ENCODE measurements at regions of chr17 and their contacts with region 1.

Region 1: DNA sequence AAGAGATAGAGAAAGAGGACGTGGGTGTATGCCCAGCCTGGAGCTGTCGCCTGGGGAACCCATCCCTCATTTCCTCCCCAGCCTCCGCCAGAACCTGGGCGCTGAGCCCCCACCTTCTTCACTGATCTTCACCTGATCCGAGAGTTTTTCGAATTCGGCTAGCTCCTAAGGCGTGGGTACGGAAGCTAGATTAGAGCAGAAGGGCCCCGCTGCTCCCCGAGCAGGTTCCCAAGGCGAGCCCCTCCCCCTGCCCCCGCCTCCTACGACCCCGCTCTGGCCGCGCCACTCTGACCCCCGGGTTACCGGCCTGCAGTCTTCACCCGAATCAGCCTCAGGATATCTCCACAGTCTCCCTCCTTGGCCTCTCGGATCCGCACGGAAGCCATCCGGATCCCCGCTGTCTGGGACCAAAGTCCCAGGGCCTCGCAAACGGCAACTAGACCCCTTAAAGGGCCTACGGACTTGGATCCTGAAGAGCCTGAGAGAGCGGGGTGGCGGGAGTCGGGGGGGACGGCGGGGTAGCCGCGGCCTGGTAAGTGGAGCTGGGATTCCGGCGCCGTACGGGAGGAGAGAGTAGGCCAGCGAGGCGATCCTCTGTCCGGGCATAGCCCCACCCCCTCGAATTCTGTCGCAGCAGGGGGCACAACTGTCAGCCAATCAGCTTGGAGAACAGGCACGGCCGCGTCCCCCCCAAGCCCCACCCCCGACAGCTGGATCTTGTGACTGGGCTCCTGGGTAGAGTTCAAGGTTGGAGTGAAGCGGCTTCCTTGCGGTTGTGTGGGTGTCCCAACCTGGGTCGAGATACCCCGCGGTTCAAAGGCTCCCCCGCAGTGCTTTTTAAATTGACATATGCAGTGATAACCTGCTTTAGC is at the start of gene SAT2:
- DNase-seq: peak; percentile 76 to 94 (median 86)
- ATAC-seq: peak; percentile 95
- H3K4me3 ChIP-seq: peak within 1 kb of the TSS; percentile 78 to 85
- H3K4me3 Mint-ChIP-seq: peak within 1 kb of the TSS; percentile 93
- H3K27ac ChIP-seq: peak within 1 kb of the TSS; percentile 74 to 78
- H3K27ac Mint-ChIP-seq: peak within 1 kb of the TSS; percentile 94
- H3K4me1 ChIP-seq: peaks cover 7% of the 10 kb centered on the region
- H3K4me1 Mint-ChIP-seq: peaks cover 16% of the 10 kb centered on the region
- H3K27me3 ChIP-seq: no peaks in the 10 kb centered on the region
- H3K27me3 Mint-ChIP-seq: no peaks in the 10 kb centered on the region
- CTCF ChIP-seq: no peak
- total RNA-seq, gene SAT2: 68.8 to 71.4 TPM

Region 2: DNA sequence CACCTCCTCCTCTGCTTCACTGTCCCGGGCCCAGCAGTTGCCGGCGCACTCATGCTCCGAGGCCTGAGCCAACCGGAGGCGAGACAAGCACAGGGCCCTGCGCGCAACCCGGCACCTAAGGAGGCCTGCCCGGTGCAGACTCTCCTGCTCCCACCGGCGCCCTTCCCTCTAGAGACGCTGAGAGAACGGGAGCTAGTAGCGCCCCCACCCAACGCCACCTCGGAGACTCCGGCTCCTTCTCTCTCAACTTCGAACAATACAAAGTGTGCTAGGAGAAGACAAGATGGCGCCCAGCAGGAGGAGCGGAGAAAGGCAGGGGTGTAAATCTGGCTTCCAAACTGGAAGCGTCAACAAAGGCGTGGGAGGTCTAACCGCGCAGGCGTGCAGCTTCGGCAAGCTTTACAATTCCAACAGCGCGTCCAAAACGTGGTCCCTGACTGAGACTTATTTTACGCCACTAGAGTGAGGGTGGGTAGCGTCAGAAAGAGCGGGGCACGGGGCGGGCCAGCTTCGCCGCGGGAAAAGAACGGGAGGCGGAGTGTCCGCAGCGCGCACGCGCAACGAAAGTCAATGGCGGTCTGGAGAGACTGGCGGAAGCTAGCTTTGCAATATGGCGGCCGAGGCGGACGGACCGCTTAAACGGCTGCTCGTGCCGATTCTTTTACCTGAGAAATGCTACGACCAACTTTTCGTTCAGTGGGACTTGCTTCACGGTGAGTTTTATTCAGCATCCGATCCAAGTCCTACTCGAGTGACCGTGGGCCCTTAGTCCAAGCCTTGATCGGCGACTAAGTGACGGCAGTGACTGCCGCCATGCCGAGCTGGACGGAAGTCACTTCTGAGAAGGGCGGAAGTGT is 44.0 kb before region 1 on chr17 and contains the start of gene MPDU1:
- CTCF ChIA-PET with region 1: no interaction called
- POLR2A ChIA-PET with region 1: interaction called, 14 read pairs
- intact Hi-C with region 1: loop called in 1 of 2 experiments (anchors 1 kb)
- DNase-seq: peak; percentile 85 to 98 (median 94)
- ATAC-seq: peak; percentile 83
- H3K4me3 ChIP-seq: peak within 1 kb of the TSS; percentile 90 to 93
- H3K4me3 Mint-ChIP-seq: peak within 1 kb of the TSS; percentile 100
- H3K27ac ChIP-seq: peak within 1 kb of the TSS; percentile 92 to 99
- H3K27ac Mint-ChIP-seq: peak within 1 kb of the TSS; percentile 100
- H3K4me1 ChIP-seq: peaks cover 40% of the 10 kb centered on the region
- H3K4me1 Mint-ChIP-seq: peaks cover 47% of the 10 kb centered on the region
- H3K27me3 ChIP-seq: no peaks in the 10 kb centered on the region
- H3K27me3 Mint-ChIP-seq: no peaks in the 10 kb centered on the region
- CTCF ChIP-seq: no peak
- total RNA-seq, gene MPDU1: 16.6 to 17.2 TPM

Region 3: GRCh38 chr17:7650509-7651096 is 23.1 kb after region 1 on chr17 and contains the start of gene ATP1B2:
- CTCF ChIA-PET with region 1: interaction called, 4 read pairs
- POLR2A ChIA-PET with region 1: interaction called, 14 read pairs
- intact Hi-C with region 1: no loop called
- DNase-seq: peak; percentile 44 to 88 (median 83)
- ATAC-seq: peak; percentile 94
- H3K4me3 ChIP-seq: peak within 1 kb of the TSS; percentile 47 to 72
- H3K4me3 Mint-ChIP-seq: peak within 1 kb of the TSS; percentile 88
- H3K27ac ChIP-seq: no peak within 1 kb of the TSS
- H3K27ac Mint-ChIP-seq: no peak within 1 kb of the TSS
- H3K4me1 ChIP-seq: peaks cover 17% of the 10 kb centered on the region
- H3K4me1 Mint-ChIP-seq: peaks cover 18% of the 10 kb centered on the region
- H3K27me3 ChIP-seq: peaks cover 8 to 19% of the 10 kb centered on the region in 2 experiments
- H3K27me3 Mint-ChIP-seq: peaks cover 33% of the 10 kb centered on the region
- CTCF ChIP-seq: no peak
- total RNA-seq, gene ATP1B2: 0.22 TPM in 1 of 2 experiments, not detected in the other